ENCODE measurements at regions of chr19 and their contacts with region 1.

Region 1: GRCh38 chr19:51480590-51480989 is 2.3 kb downstream of the CEACAM18 start:
- DNase-seq: no peak
- ATAC-seq: no peak
- H3K4me3 ChIP-seq: no peak overlapping the region
- H3K27ac ChIP-seq: no peak overlapping the region
- H3K4me1 ChIP-seq: no peaks in the 10 kb centered on the region
- H3K27me3 ChIP-seq: no peaks in the 10 kb centered on the region
- CTCF ChIP-seq: no peak
- POLR2A ChIP-seq: no peak

Region 2: DNA sequence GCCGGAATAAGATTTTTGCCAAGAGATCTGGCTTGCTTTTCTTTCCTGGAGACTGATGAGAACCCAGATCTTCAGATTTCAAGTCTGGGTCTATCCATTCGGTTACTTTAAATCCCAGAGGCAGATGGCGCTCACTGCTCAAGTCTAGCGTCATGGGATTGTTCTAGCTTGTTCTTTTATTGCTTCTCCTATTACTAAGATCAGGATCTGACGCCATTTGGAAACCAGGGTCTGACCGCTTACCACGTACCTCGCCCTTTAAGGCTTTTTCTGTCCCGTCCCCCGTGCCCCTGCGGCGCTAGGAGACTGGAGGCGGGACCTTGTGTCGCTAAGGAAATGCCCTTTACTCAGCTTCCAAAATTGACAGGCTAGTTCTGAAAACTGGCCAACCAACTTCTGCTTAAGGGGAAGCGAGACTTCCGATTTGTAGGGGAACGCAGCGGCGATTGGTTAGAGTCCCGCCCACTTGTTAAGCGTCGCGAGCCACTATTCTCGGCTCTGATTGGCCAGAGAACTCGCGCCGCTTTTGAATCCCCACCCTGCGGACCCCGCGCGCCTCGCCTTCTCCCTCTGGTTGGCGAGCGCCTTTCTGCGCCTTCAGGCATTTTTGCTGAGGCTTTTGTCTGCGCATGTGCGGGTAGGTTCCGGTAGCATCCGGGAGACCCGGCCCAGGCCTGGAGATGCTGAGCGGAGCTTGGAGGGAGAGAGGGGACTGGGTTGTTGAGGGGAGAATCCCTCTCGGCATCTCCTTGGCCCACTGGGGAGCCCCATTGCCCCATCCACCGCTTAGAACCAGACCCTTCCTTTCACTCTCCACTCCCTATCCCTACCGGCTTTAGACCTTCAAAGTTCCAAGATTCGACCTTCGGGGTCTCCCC is 86.4 kb before region 1 on chr19:
- intact Hi-C with region 1: no loop called
- DNase-seq: peak; percentile 87 to 94 (median 92)
- ATAC-seq: peak; percentile 96 to 98 (median 98)
- H3K4me3 ChIP-seq: peak overlapping the region; percentile 19 to 45 (median 31)
- H3K27ac ChIP-seq: peak overlapping the region; percentile 39 to 59 (median 52)
- H3K4me1 ChIP-seq: peaks cover 0 to 3% (median 0%) of the 10 kb centered on the region in 4 donors
- H3K27me3 ChIP-seq: no peaks in the 10 kb centered on the region
- CTCF ChIP-seq: no peak
- POLR2A ChIP-seq: no peak

Region 3: DNA sequence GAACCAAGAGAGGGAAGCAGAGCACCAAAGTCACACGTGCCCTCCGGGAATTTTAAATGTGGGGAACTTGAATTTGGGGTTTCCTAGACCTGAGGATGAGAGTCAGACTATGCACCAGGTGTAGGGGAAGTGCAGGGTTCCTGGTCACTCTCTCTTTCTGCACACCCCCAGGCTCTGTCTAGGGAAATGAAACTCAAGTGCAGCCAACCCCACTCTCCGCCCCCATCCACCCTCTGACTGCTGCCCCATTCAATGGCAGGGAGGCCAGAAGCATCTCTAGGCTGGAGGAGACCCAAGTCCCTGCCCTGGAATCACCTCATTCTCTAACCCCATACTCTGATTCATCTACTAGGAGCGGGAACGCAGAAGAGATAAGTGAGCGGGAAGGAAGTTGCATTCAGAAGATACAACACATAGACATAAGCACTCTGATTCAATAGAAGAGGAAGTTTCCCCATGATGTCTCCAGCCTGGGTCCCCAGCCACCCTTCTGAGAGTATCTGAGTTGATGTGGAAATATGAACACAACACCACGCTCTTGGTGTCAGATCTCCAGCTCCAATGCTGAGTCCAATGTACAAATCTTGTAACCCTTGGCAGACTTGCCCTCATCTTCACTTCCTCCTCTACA is 170.7 kb after region 1 on chr19:
- intact Hi-C with region 1: loop called in 1 of 2 experiments (anchors 10 kb)
- DNase-seq: no peak
- ATAC-seq: peak; percentile 52 to 75 (median 63)
- H3K4me3 ChIP-seq: no peak overlapping the region
- H3K27ac ChIP-seq: no peak overlapping the region
- H3K4me1 ChIP-seq: no peaks in the 10 kb centered on the region
- H3K27me3 ChIP-seq: no peaks in the 10 kb centered on the region
- CTCF ChIP-seq: no peak
- POLR2A ChIP-seq: no peak

Region 4: DNA sequence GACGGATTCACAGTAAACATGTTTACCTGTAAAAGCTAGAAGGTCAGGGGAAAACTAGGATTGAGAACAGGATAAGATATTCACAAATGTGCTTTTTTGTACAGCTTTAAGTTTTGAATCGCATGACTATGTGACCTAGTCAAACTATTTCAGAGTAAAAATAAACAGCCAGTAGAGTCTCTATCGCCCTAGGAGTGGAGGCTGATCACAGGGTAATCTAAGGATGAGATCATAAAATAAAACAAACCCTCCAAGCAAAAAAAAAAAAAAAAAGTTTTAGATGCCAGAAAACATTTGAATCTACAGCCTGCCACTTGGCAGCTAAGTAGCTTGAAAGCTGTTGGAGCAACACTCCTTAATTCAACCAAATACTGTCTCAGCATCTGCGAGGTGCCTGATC is 479.2 kb after region 1 on chr19:
- intact Hi-C with region 1: no loop called
- DNase-seq: no peak
- ATAC-seq: no peak
- H3K4me3 ChIP-seq: no peak overlapping the region
- H3K27ac ChIP-seq: no peak overlapping the region
- H3K4me1 ChIP-seq: no peaks in the 10 kb centered on the region
- H3K27me3 ChIP-seq: no peaks in the 10 kb centered on the region
- CTCF ChIP-seq: no peak
- POLR2A ChIP-seq: no peak